Activated CD4-positive, alpha-beta T cell treated with anti-CD3 and anti-CD28 coated beads for 36 hours (primary cell): ENCODE measurements at regions of chr4 and their contacts with region 1.

Region 1: GRCh38 chr4:143335979-143336780 is 496 bp upstream of the GAB1 start:
- DNase-seq: peak; percentile 46
- ATAC-seq: peak; percentile 51
- H3K4me3 Mint-ChIP-seq: peak overlapping the region; percentile 76
- H3K27ac Mint-ChIP-seq: no peak overlapping the region
- H3K4me1 Mint-ChIP-seq: peaks cover 8% of the 10 kb centered on the region
- H3K27me3 Mint-ChIP-seq: peaks cover 36% of the 10 kb centered on the region

Region 2: GRCh38 chr4:143358923-143359643 is 22.9 kb after region 1 on chr4:
- CTCF ChIA-PET with region 1: no interaction called
- POLR2A ChIA-PET with region 1: no interaction called
- intact Hi-C with region 1: loop called in 1 of 2 experiments (anchors 1 kb)
- DNase-seq: peak; percentile 69
- ATAC-seq: peak; percentile 88
- H3K4me3 Mint-ChIP-seq: peak overlapping the region; percentile 17
- H3K27ac Mint-ChIP-seq: peak overlapping the region; percentile 90
- H3K4me1 Mint-ChIP-seq: peaks cover 27% of the 10 kb centered on the region
- H3K27me3 Mint-ChIP-seq: no peaks in the 10 kb centered on the region

Region 3: DNA sequence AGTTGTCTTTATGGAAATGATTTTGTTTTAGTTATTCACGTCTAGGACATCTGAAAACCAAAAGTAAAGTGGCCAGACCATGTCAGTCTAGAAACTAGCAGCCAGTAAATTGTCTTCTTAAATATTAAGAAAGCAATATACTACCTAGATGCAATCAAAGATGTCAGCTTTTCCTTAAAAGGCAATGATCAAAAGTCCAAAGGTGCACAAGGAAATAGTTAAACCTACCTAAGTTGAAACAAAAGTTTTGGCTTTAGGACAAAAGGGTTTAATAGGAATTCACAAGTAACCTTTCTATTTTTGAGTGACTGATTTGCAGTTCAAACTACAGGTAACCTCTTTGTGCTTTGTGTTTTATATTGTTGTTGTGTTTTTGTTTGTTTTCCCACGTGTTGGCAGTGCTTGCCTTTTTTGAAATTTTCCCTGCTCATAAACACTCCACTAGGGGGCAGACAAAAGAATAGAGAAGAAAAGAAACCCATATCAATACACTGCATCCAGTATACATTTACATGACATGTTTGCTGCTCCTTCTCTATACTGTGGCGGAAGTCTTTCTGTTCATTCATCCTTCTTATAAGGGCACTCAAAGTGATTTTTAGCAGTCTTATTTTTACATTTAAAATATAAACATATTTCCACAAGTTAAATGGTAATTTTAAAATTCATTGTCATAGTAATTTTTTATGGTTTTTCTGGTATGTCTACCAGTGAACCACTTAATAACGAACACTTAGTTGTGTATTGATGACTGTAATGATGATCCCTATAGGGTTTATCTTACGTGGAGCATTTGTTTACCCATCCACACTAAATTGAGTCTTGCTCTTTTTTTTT is 63.2 kb after region 1 on chr4:
- CTCF ChIA-PET with region 1: interaction called, 3 read pairs
- POLR2A ChIA-PET with region 1: no interaction called
- intact Hi-C with region 1: loop called in 1 of 2 experiments (anchors 2 kb)
- DNase-seq: no peak
- ATAC-seq: no peak
- H3K4me3 Mint-ChIP-seq: no peak overlapping the region
- H3K27ac Mint-ChIP-seq: no peak overlapping the region
- H3K4me1 Mint-ChIP-seq: peaks cover 9% of the 10 kb centered on the region
- H3K27me3 Mint-ChIP-seq: peaks cover 2% of the 10 kb centered on the region